CD14-positive monocyte (primary cell): ENCODE measurements at regions of chr11 and their contacts with region 1.

Region 1: DNA sequence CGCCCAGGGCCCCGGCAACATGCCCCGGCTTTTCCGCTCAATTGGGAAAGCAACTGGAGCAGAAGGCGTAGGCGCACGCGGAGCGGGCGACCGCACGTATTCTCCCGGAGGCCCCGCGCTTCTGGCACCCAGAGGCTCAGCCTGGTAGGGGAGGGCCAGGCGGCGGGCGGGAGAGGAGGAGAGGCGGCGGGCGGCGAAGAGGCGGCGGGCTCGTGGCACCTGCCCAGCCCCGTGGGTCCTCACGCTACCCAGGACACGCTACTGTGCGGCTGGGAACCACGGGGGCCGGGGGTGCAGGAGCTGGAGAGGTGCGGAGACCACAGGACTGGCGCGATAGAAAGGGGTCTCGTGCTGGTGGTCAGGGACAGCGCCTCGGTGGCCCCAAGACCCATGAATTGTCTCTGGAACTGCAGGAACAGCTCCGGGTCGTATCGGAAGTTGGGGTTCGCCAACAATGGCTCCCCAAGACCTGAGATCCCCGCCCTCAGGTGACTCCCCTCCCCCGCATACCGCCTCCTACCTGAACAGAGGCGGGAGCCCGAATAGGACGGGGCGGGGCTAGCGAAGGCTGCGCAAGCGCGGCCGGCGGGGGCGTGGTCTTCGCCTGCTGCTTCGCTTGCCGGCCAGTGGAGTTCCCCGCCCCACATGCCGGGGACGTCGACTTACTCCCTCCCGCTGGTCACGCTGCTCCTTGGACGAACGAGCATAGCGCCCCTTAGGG is at the start of gene SLC37A4:
- DNase-seq: peak; percentile 97 to 98 (median 97)
- H3K4me3 ChIP-seq: peak within 1 kb of the TSS; percentile 76 to 97 (median 84)
- H3K4me3 Mint-ChIP-seq: peak within 1 kb of the TSS; percentile 81 to 85
- H3K27ac ChIP-seq: peak within 1 kb of the TSS in 1 of 2 donors; percentile 65
- H3K27ac Mint-ChIP-seq: peak within 1 kb of the TSS in 4 of 7 donors; percentile 15 to 75 (median 44)
- H3K4me1 ChIP-seq: peaks cover 8 to 15% of the 10 kb centered on the region in 2 donors
- H3K4me1 Mint-ChIP-seq: peaks cover 16% of the 10 kb centered on the region
- H3K27me3 ChIP-seq: no peaks in the 10 kb centered on the region
- H3K27me3 Mint-ChIP-seq: no peaks in the 10 kb centered on the region
- CTCF ChIP-seq: peak; percentile 88
- polyA plus RNA-seq, gene SLC37A4: 5.9 to 8.0 (median 7.2) TPM

Region 2: DNA sequence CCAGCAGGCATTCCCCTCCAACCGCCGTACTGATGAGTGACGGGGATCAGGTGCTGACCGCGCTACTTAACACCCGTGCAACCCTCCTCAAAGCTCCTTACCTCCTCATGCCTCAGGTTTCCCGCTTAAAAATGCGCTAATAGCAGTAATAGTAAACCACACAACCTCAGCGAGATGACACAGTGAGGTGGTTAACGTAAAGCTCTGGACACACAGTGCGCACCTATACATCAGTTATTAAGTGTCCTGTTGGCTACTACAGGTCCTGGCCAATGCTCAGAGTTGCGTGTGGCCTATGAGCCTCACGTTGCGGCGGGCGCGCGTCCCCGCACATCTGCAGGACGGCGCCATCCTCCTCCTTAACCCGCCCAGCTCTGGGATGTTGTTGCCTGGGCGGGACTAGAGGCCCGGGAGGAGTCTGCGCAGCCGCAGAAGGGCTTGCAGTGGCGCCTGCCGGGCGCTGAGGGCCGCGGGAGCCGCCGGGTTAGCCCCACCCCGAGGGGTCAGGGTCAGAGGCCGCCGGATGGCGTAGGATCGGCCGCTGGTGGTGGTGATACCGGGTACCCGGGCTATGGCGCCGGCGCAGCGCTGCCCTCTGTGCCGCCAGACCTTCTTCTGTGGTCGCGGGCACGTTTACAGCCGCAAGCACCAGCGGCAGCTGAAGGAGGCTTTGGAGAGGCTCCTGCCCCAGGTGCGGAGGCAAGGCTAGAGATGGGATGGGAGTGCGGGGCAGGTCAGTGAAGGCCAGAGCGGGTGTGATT is 32.7 kb before region 1 on chr11 and contains the start of gene CENATAC:
- intact Hi-C with region 1: loop called in 1 of 2 experiments (anchors 5 kb)
- DNase-seq: peak; percentile 91 to 95 (median 93)
- H3K4me3 ChIP-seq: peak within 1 kb of the TSS; percentile 65 to 87 (median 82)
- H3K4me3 Mint-ChIP-seq: peak within 1 kb of the TSS; percentile 95 to 97
- H3K27ac ChIP-seq: peak within 1 kb of the TSS; percentile 37 to 87
- H3K27ac Mint-ChIP-seq: peak within 1 kb of the TSS; percentile 92 to 97 (median 95)
- H3K4me1 ChIP-seq: peaks cover 19 to 23% of the 10 kb centered on the region in 2 donors
- H3K4me1 Mint-ChIP-seq: peaks cover 25% of the 10 kb centered on the region
- H3K27me3 ChIP-seq: no peaks in the 10 kb centered on the region
- H3K27me3 Mint-ChIP-seq: peaks cover 0 to 2% (median 0%) of the 10 kb centered on the region in 3 donors
- CTCF ChIP-seq: no peak
- polyA plus RNA-seq, gene CENATAC: 2.7 to 47.8 (median 4.1) TPM

Region 3: GRCh38 chr11:119018074-119018938 is 12.2 kb before region 1 on chr11 and contains the starts of genes RPS25 and TRAPPC4:
- intact Hi-C with region 1: loop called in 1 of 2 experiments (anchors 1 kb)
- DNase-seq: peak; percentile 96 to 97 (median 96)
- H3K4me3 ChIP-seq: peak within 1 kb of the TSS; percentile 87 to 88 (median 88)
- H3K4me3 Mint-ChIP-seq: peak within 1 kb of the TSS; percentile 96 to 97
- H3K27ac ChIP-seq: peak within 1 kb of the TSS; percentile 93 to 96
- H3K27ac Mint-ChIP-seq: peak within 1 kb of the TSS; percentile 98 to 100 (median 99)
- H3K4me1 ChIP-seq: peaks cover 26 to 34% of the 10 kb centered on the region in 2 donors
- H3K4me1 Mint-ChIP-seq: peaks cover 24% of the 10 kb centered on the region
- H3K27me3 ChIP-seq: no peaks in the 10 kb centered on the region
- H3K27me3 Mint-ChIP-seq: peaks cover 0 to 1% (median 0%) of the 10 kb centered on the region in 3 donors
- CTCF ChIP-seq: no peak
- polyA plus RNA-seq, gene RPS25: 1,137 to 1,336 (median 1,264) TPM
- polyA plus RNA-seq, gene TRAPPC4: 46.9 to 54.5 (median 50.0) TPM

Region 4: GRCh38 chr11:119044708-119045107 is 14.2 kb after region 1 on chr11:
- intact Hi-C with region 1: no loop called
- DNase-seq: no peak
- H3K4me3 ChIP-seq: no peak overlapping the region
- H3K4me3 Mint-ChIP-seq: no peak overlapping the region
- H3K27ac ChIP-seq: no peak overlapping the region
- H3K27ac Mint-ChIP-seq: peak overlapping the region in 2 of 7 donors; percentile 15 to 69
- H3K4me1 ChIP-seq: no peaks in the 10 kb centered on the region
- H3K4me1 Mint-ChIP-seq: peaks cover 3% of the 10 kb centered on the region
- H3K27me3 ChIP-seq: no peaks in the 10 kb centered on the region
- H3K27me3 Mint-ChIP-seq: peaks cover 0 to 2% (median 0%) of the 10 kb centered on the region in 3 donors
- CTCF ChIP-seq: peak; percentile 15

Region 5: DNA sequence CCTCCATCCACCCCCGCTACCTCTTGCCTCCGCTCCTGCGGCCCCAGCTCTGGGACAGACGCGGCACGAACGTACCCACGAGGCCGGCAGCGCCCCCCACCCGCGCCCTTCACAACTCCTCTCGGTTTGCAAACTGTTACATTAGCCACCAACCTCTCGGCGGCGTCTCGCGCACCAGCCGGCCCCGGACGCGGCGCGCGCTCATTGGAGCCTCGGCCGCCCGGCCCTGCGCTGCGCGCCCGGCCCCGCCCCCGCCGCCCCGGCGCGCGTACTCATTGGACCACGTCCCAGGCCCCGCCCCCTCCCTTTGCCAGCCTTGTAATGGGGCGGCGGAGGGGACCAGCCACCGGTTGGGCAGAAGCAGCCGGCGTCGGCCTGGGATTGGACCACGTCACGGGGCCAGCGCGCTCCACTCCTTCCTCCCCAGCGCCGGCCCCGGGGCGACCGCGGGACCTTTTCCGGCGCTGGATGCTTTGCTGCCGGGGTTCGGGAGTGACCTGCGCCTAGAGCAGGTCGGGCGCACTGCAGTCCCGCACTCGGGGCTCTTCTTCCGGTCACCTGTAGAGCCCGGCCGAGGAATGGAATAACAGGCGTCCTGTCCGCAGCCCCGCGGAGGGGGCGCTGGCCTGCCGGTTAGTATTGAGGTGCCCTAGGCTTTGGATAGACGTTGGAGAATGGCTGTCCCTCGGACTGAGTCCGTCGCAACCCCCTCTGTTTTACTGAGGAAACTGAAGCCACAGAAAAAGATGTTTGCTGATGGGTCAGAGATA is 26.7 kb after region 1 on chr11 and contains the start of gene HYOU1:
- intact Hi-C with region 1: loop called in 1 of 2 experiments (anchors 2 kb)
- DNase-seq: peak; percentile 96 to 97 (median 97)
- H3K4me3 ChIP-seq: peak within 1 kb of the TSS; percentile 71 to 91 (median 88)
- H3K4me3 Mint-ChIP-seq: peak within 1 kb of the TSS; percentile 93 to 94
- H3K27ac ChIP-seq: peak within 1 kb of the TSS; percentile 69 to 94
- H3K27ac Mint-ChIP-seq: peak within 1 kb of the TSS; percentile 89 to 96 (median 96)
- H3K4me1 ChIP-seq: peaks cover 17 to 22% of the 10 kb centered on the region in 2 donors
- H3K4me1 Mint-ChIP-seq: peaks cover 21% of the 10 kb centered on the region
- H3K27me3 ChIP-seq: no peaks in the 10 kb centered on the region
- H3K27me3 Mint-ChIP-seq: peaks cover 0 to 1% (median 0%) of the 10 kb centered on the region in 3 donors
- CTCF ChIP-seq: no peak
- polyA plus RNA-seq, gene HYOU1: 8.4 to 34.9 (median 8.6) TPM

Region 6: DNA sequence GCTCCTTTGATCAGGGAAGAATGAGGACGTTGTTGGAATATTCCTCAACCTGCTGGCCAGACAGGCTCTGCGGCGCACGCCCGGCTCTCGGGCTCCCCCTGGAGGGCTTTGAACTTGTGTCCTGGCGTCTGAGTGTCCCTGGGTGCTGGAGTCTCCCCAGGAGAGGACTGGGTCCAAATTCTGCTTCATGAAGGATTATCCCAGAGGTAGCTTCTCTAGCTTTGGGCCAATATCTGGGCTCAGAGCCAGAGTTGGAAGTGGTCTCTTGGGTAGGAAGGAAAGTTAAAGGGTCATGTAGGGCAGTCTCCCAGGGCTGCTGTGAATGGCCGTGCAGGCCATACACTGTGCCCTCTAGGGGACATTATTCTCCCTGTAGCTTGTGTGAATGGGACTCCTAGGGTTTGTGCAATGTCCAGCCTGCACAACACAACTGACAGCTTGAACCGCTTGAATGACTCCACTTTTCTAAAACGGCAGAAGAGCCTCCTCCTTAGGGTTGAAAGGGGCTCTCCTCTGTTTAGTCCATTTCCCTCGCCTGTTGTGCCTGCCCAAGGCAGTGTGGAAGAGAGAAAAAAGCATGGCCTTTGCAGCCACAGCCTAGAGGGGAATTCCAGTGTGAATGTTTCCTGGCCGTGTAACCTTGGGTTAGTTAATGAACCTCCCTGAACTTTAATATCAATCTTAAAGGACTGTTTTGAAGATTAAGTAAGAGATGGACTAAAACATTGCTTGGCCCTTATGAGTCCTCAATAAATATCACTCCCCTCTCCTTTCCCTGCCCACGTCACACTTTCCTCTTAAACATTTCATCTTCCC is 503.6 kb after region 1 on chr11:
- intact Hi-C with region 1: no loop called
- DNase-seq: peak; percentile 68 to 78 (median 70)
- H3K4me3 ChIP-seq: peak overlapping the region in 1 of 3 experiments; percentile 53
- H3K4me3 Mint-ChIP-seq: peak overlapping the region; percentile 61 to 83
- H3K27ac ChIP-seq: peak overlapping the region in 1 of 2 donors; percentile 72
- H3K27ac Mint-ChIP-seq: peak overlapping the region; percentile 67 to 93 (median 82)
- H3K4me1 ChIP-seq: peaks cover 45 to 61% of the 10 kb centered on the region in 2 donors
- H3K4me1 Mint-ChIP-seq: peaks cover 67% of the 10 kb centered on the region
- H3K27me3 ChIP-seq: no peaks in the 10 kb centered on the region
- H3K27me3 Mint-ChIP-seq: peaks cover 0 to 2% (median 1%) of the 10 kb centered on the region in 3 donors
- CTCF ChIP-seq: peak; percentile 99